ENCODE measurements at regions of chr16 and their contacts with region 1.

Region 1: DNA sequence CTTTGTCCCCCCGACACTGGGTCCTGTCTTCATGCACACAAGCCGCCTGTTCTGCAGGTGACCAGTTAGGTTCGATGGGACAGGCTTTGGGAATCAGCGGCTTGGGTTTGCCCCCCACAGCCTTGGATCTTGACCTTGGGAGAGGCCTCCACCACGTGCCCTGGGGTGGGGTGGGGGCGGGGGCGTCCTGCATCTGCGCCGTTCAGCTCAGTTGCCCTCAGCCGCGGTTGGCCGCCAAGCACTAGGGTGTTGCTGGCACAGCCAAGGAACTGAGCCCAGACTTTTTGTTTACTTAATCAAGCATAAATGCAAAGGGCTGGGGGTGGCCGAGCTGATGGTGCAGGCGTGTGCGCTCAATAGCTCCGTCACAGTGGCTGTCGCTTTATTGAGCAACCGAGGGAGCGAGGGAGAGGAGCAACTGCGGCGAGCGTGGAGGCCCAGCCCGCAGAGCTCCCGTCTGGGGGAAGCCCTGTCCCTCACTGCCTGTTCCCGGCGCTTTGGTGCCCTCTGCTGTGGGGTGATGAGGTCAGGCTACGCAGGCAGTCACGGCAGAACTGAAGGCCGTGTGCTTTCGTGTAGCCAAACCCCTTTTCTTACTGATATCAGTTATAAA is 33.9 kb downstream of the JPH3 start:
- DNase-seq: peak; percentile 96

Region 2: GRCh38 chr16:87416826-87417527 is 219.2 kb before region 1 on chr16:
- intact Hi-C with region 1: loop called (anchors 5 kb)
- DNase-seq: peak; percentile 82

Region 3: GRCh38 chr16:87550496-87550961 is 85.6 kb before region 1 on chr16:
- intact Hi-C with region 1: loop called in 1 of 2 experiments (anchors 2 kb)
- DNase-seq: no peak

Region 4: DNA sequence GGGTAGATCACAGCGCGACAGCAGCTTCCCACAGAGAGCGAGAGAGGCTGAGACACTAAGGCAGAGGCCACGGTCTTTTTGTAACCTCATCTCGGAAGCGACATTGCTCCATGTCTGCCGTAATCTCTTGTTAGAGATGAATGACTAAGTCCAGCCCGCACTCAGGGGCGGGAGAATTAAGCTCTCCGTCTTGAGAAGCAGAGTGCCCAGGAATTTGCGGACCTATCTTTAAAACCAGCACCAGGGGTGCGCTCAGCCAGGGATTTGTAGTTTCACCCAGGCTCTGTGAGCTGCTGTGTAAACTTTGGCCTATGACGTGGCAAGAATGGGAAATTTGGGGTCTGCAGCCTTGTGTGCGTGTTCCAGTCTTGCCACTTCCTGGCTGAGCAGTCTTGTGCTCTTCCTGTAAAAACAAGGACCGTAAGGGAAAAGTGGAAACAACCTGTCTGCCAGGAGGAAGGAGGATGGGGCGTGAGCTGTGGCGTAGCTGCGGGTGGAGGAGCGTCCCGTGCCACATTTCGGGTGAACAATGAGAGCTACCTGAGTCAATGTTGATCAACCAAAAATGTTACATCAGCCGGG is 49.9 kb before region 1 on chr16:
- intact Hi-C with region 1: loop called (anchors 2 to 5 kb)
- DNase-seq: no peak

Region 5: DNA sequence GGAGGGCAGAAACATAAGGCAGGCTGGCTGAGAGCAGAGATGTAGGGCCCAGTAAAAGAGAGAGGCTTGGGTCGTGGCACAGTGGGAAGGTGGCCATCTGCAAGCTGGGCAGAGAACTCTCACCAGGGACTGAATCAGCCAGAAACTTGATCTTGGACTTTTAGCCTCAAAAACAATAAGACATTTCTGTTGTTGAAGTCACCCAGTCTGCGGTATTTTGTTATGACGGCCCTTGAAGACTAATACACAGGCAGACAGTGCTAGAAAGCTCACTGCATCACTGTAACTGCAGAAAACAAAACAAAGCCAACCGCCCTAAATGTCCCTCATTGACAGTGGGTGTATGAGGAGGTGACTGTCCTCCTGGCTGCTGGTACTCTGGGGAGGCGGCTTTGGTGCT is 37.7 kb before region 1 on chr16:
- intact Hi-C with region 1: loop called in 1 of 2 experiments (anchors 5 kb)
- DNase-seq: no peak

Measured in posterior vena cava (tissue), 2 donors.